Endothelial cell of umbilical vein (primary cell): ENCODE measurements at regions of chr19 and their contacts with region 1.

Region 1: GRCh38 chr19:8412783-8413628 is at the start of gene MARCHF2:
- DNase-seq: peak; percentile 98
- H3K4me3 ChIP-seq: peak within 1 kb of the TSS; percentile 55 to 72 (median 57)
- H3K27ac ChIP-seq: peak within 1 kb of the TSS; percentile 69
- H3K4me1 ChIP-seq: peaks cover 9% of the 10 kb centered on the region
- H3K27me3 ChIP-seq: no peaks in the 10 kb centered on the region
- CTCF ChIP-seq: peak; percentile 31 to 65
- POLR2A ChIP-seq: peak; percentile 58
- total RNA-seq, gene MARCHF2: 40.1 and 43.5 TPM in 2 replicates

Region 2: GRCh38 chr19:8332976-8333770 is 79.8 kb before region 1 on chr19:
- CTCF ChIA-PET with region 1: no interaction called
- POLR2A ChIA-PET with region 1: no interaction called
- dilution Hi-C with region 1: no loop called
- intact Hi-C with region 1: no loop called
- DNase-seq: no peak
- H3K4me3 ChIP-seq: no peak overlapping the region
- H3K27ac ChIP-seq: no peak overlapping the region
- H3K4me1 ChIP-seq: peaks cover 5% of the 10 kb centered on the region
- H3K27me3 ChIP-seq: no peaks in the 10 kb centered on the region
- CTCF ChIP-seq: no peak
- POLR2A ChIP-seq: no peak

Region 3: GRCh38 chr19:8389891-8390616 is 23.0 kb before region 1 on chr19 and contains the start of gene RAB11B:
- CTCF ChIA-PET with region 1: interaction called, 8 read pairs
- POLR2A ChIA-PET with region 1: interaction called, 3 read pairs
- dilution Hi-C with region 1: no loop called
- intact Hi-C with region 1: loop called (anchors 1 kb)
- DNase-seq: peak; percentile 100
- H3K4me3 ChIP-seq: peak within 1 kb of the TSS; percentile 62 to 93 (median 69)
- H3K27ac ChIP-seq: peak within 1 kb of the TSS; percentile 97
- H3K4me1 ChIP-seq: peaks cover 23% of the 10 kb centered on the region
- H3K27me3 ChIP-seq: no peaks in the 10 kb centered on the region
- CTCF ChIP-seq: no peak
- POLR2A ChIP-seq: peak; percentile 54
- total RNA-seq, gene RAB11B: 92.2 and 99.8 TPM in 2 replicates

Region 4: GRCh38 chr19:8396563-8397203 is 16.3 kb before region 1 on chr19:
- CTCF ChIA-PET with region 1: interaction called, 12 read pairs
- POLR2A ChIA-PET with region 1: no interaction called
- dilution Hi-C with region 1: no loop called
- intact Hi-C with region 1: no loop called
- DNase-seq: peak; percentile 74
- H3K4me3 ChIP-seq: no peak overlapping the region
- H3K27ac ChIP-seq: peak overlapping the region; percentile 23
- H3K4me1 ChIP-seq: peaks cover 28% of the 10 kb centered on the region
- H3K27me3 ChIP-seq: no peaks in the 10 kb centered on the region
- CTCF ChIP-seq: peak; percentile 75 to 91
- POLR2A ChIP-seq: no peak

Region 5: GRCh38 chr19:8423817-8424223 is 10.8 kb after region 1 on chr19:
- CTCF ChIA-PET with region 1: interaction called, 48 read pairs
- POLR2A ChIA-PET with region 1: interaction called, 8 read pairs
- dilution Hi-C with region 1: no loop called
- intact Hi-C with region 1: loop called (anchors 1 kb)
- DNase-seq: peak; percentile 96
- H3K4me3 ChIP-seq: peak overlapping the region in 1 of 3 experiments; percentile 7
- H3K27ac ChIP-seq: peak overlapping the region; percentile 97
- H3K4me1 ChIP-seq: peaks cover 13% of the 10 kb centered on the region
- H3K27me3 ChIP-seq: no peaks in the 10 kb centered on the region
- CTCF ChIP-seq: no peak
- POLR2A ChIP-seq: no peak

Region 6: DNA sequence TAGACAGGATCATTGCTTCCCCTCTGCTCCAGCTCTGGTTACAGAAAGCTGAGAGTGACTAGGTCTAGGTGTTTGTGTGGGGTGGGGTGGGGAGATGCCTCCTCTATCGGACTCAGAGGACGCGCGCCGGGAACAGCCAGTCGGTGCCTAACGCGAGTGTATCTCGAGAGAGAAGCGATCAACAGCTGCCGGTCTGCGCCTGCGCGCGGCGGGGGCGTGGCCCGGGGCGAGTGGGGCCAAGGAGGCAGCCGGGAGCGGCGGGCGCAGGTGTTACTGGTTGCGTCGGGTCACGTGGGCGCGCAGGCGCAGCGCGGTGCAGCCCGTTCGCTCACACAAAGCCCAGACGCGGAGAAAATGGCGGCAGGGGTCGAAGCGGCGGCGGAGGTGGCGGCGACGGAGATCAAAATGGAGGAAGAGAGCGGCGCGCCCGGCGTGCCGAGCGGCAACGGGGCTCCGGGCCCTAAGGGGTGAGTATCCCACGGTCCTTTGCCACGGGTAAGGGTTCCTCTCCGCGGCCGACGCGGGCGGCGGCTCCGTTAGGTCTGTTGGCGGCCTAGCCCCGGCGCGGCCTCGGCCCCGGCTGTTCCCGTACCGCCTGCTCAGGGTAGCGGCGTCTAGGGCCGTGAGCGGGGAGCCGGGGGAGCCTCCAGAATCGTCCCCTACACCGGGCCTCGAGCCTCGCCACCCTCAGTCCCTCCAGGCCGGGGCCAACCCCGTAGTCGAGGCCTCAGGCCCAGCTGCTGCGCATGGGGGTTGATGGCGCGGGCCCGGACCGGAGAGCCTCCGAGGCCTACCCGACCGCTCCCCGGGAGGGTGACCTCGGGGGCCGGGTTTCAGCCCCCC is 31.9 kb after region 1 on chr19 and contains the start of gene HNRNPM:
- CTCF ChIA-PET with region 1: interaction called, 16 read pairs
- POLR2A ChIA-PET with region 1: interaction called, 11 read pairs
- dilution Hi-C with region 1: no loop called
- intact Hi-C with region 1: loop called (anchors 1 kb)
- DNase-seq: peak; percentile 99
- H3K4me3 ChIP-seq: peak within 1 kb of the TSS; percentile 81 to 98 (median 84)
- H3K27ac ChIP-seq: peak within 1 kb of the TSS; percentile 93
- H3K4me1 ChIP-seq: peaks cover 25% of the 10 kb centered on the region
- H3K27me3 ChIP-seq: no peaks in the 10 kb centered on the region
- CTCF ChIP-seq: no peak
- POLR2A ChIP-seq: peak; percentile 77
- total RNA-seq, gene HNRNPM: 288 and 301 TPM in 2 replicates

Region 7: GRCh38 chr19:8451885-8452284 is 38.9 kb after region 1 on chr19:
- CTCF ChIA-PET with region 1: interaction called, 13 read pairs
- POLR2A ChIA-PET with region 1: no interaction called
- dilution Hi-C with region 1: no loop called
- intact Hi-C with region 1: no loop called
- DNase-seq: no peak
- H3K4me3 ChIP-seq: no peak overlapping the region
- H3K27ac ChIP-seq: no peak overlapping the region
- H3K4me1 ChIP-seq: peaks cover 31% of the 10 kb centered on the region
- H3K27me3 ChIP-seq: no peaks in the 10 kb centered on the region
- CTCF ChIP-seq: no peak
- POLR2A ChIP-seq: no peak

Region 8: GRCh38 chr19:8505680-8506401 is 92.8 kb after region 1 on chr19:
- CTCF ChIA-PET with region 1: interaction called, 9 read pairs
- POLR2A ChIA-PET with region 1: interaction called, 3 read pairs
- dilution Hi-C with region 1: no loop called
- intact Hi-C with region 1: loop called (anchors 2 kb)
- DNase-seq: peak; percentile 68
- H3K4me3 ChIP-seq: peak overlapping the region; percentile 41 to 61 (median 55)
- H3K27ac ChIP-seq: no peak overlapping the region
- H3K4me1 ChIP-seq: peaks cover 8% of the 10 kb centered on the region
- H3K27me3 ChIP-seq: no peaks in the 10 kb centered on the region
- CTCF ChIP-seq: peak; percentile 86 to 92
- POLR2A ChIP-seq: no peak

Region 9: GRCh38 chr19:8884416-8884815 is 471.4 kb after region 1 on chr19:
- CTCF ChIA-PET with region 1: no interaction called
- POLR2A ChIA-PET with region 1: no interaction called
- dilution Hi-C with region 1: no loop called
- intact Hi-C with region 1: no loop called
- DNase-seq: no peak
- H3K4me3 ChIP-seq: no peak overlapping the region
- H3K27ac ChIP-seq: no peak overlapping the region
- H3K4me1 ChIP-seq: no peaks in the 10 kb centered on the region
- H3K27me3 ChIP-seq: no peaks in the 10 kb centered on the region
- CTCF ChIP-seq: no peak
- POLR2A ChIP-seq: no peak